ENCODE measurements at regions of chr21 and their contacts with region 1.

Region 1: GRCh38 chr21:26169061-26169610 is 1.4 kb downstream of the APP start:
- DNase-seq: peak; percentile 9 to 68 (median 34)
- ATAC-seq: peak; percentile 51 to 67 (median 60)
- H3K4me3 ChIP-seq: peak overlapping the region; percentile 69 to 89
- H3K4me3 Mint-ChIP-seq: peak overlapping the region; percentile 86 to 94 (median 92)
- H3K27ac ChIP-seq: no peak overlapping the region
- H3K27ac Mint-ChIP-seq: peak overlapping the region; percentile 77 to 86
- H3K4me1 ChIP-seq: peaks cover 0 to 16% of the 10 kb centered on the region in 2 experiments
- H3K4me1 Mint-ChIP-seq: peaks cover 20 to 24% (median 23%) of the 10 kb centered on the region in 3 donors
- H3K27me3 ChIP-seq: peaks cover 0 to 17% of the 10 kb centered on the region in 2 experiments
- H3K27me3 Mint-ChIP-seq: peaks cover 0 to 11% of the 10 kb centered on the region in 2 donors

Region 2: DNA sequence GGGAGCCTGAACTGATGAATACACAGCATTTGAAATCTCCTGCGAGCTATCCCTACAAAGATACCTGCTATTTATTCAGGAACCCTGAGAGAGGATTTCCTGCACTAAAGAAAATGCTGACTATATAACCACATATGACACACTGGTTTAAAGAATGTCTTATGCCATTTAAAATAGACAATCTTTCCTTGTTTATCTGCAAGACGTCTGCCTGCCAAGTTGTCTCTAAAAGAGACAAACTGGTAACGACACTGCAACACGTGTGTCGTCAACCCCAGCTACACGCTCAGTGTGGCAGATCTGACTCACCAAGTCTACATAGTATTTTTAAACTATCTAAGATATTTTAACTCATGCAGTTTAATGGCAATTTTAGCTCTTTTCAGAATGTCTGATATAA is 41.2 kb before region 1 on chr21:
- CTCF ChIA-PET with region 1: no interaction called
- POLR2A ChIA-PET with region 1: no interaction called
- DNase-seq: no peak
- ATAC-seq: no peak
- H3K4me3 ChIP-seq: no peak overlapping the region
- H3K4me3 Mint-ChIP-seq: no peak overlapping the region
- H3K27ac ChIP-seq: no peak overlapping the region
- H3K27ac Mint-ChIP-seq: no peak overlapping the region
- H3K4me1 ChIP-seq: peaks cover 0 to 2% of the 10 kb centered on the region in 2 experiments
- H3K4me1 Mint-ChIP-seq: peaks cover 0 to 33% (median 13%) of the 10 kb centered on the region in 3 donors
- H3K27me3 ChIP-seq: no peaks in the 10 kb centered on the region
- H3K27me3 Mint-ChIP-seq: no peaks in the 10 kb centered on the region

Region 3: GRCh38 chr21:26148079-26148839 is 20.9 kb before region 1 on chr21:
- CTCF ChIA-PET with region 1: interaction called, 3 read pairs
- POLR2A ChIA-PET with region 1: interaction called in 1 of 2 experiments, 13 read pairs
- DNase-seq: no peak
- ATAC-seq: peak; percentile 29 to 84 (median 50)
- H3K4me3 ChIP-seq: peak overlapping the region in 1 of 2 donors; percentile 6
- H3K4me3 Mint-ChIP-seq: peak overlapping the region in 2 of 3 donors; percentile 9 to 61
- H3K27ac ChIP-seq: no peak overlapping the region
- H3K27ac Mint-ChIP-seq: peak overlapping the region in 1 of 2 donors; percentile 48
- H3K4me1 ChIP-seq: peaks cover 8 to 18% of the 10 kb centered on the region in 2 experiments
- H3K4me1 Mint-ChIP-seq: peaks cover 19 to 20% (median 20%) of the 10 kb centered on the region in 3 donors
- H3K27me3 ChIP-seq: no peaks in the 10 kb centered on the region
- H3K27me3 Mint-ChIP-seq: no peaks in the 10 kb centered on the region

Region 4: GRCh38 chr21:26157801-26158200 is 11.3 kb before region 1 on chr21:
- CTCF ChIA-PET with region 1: interaction called, 3 to 10 read pairs
- POLR2A ChIA-PET with region 1: no interaction called
- DNase-seq: no peak
- ATAC-seq: peak in 1 of 4 experiments; percentile 65
- H3K4me3 ChIP-seq: no peak overlapping the region
- H3K4me3 Mint-ChIP-seq: no peak overlapping the region
- H3K27ac ChIP-seq: no peak overlapping the region
- H3K27ac Mint-ChIP-seq: peak overlapping the region in 1 of 2 donors; percentile 7
- H3K4me1 ChIP-seq: peaks cover 4 to 8% of the 10 kb centered on the region in 2 experiments
- H3K4me1 Mint-ChIP-seq: peaks cover 22 to 26% (median 26%) of the 10 kb centered on the region in 3 donors
- H3K27me3 ChIP-seq: no peaks in the 10 kb centered on the region
- H3K27me3 Mint-ChIP-seq: no peaks in the 10 kb centered on the region